Activated naive CD4-positive, alpha-beta T cell treated with anti-CD3 and anti-CD28 coated beads, Interleukin-2, amount 10 ng/mL, durations not matched to agents 7 days and 5 days (primary cell): ENCODE measurements at regions of chr16 and their contacts with region 1.

Region 1: DNA sequence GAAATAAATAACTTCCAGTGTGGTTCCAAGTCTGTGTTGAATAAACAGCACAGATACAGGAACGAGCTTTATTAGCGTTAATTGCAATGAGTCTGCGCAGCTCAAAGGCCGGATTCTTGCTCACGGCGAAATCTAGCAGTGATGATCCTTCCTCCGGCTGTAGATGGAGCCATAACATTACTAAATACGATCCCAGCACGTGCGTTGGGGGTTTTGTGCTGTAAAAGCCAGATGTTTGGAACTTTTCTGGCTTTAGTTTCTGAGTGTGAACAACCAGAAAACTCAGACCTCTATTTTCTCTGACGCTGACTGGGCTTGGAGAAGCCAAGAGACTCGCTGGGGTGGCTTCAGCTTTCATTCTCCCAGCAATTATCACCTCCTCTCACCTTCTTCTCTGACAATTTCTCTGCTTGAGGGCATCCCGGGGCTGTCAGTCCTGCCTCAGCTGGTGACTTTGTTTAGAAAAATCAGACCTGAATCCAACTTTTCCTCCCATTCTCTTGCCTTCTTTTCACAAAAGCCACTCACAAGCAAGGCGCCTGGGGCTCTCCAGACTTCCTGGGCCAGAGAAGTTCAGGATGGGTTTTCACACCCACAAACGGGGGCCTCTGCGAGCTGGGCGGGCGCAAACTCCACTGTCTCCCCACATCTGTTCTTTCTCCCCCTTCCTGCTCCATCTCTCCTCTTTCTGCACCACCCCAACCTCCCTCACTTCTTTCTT is 47.1 kb upstream of the AKTIP start:
- DNase-seq: peak; percentile 64
- H3K4me3 Mint-ChIP-seq: no peak overlapping the region
- H3K27ac Mint-ChIP-seq: no peak overlapping the region
- H3K4me1 Mint-ChIP-seq: peaks cover 35% of the 10 kb centered on the region
- H3K27me3 Mint-ChIP-seq: peaks cover 58% of the 10 kb centered on the region

Region 2: DNA sequence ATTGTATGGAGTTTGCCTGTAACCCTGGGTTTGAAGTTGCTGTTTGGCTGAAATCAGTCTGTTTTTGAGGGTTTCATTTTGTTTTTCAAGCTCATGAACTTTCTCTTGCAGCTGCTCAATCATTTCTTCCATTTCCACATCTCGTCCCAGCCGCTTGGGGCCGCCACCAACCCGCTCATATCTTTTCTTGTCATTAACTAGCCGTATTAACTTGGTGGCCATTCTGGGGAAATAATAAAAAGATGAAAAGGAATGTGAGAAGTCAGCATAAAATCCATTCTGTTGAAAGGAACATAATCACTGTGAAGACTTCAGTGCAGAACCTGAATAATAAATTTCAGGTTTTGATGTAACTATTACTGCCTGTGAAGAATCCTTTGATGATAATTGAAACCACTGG is 142.0 kb after region 1 on chr16:
- CTCF ChIA-PET with region 1: no interaction called
- DNase-seq: no peak
- H3K4me3 Mint-ChIP-seq: no peak overlapping the region
- H3K27ac Mint-ChIP-seq: no peak overlapping the region
- H3K4me1 Mint-ChIP-seq: no peaks in the 10 kb centered on the region
- H3K27me3 Mint-ChIP-seq: no peaks in the 10 kb centered on the region

Region 3: GRCh38 chr16:53703590-53704444 is 153.7 kb after region 1 on chr16 and contains the starts of genes FTO and RPGRIP1L:
- CTCF ChIA-PET with region 1: interaction called, 10 read pairs
- DNase-seq: peak; percentile 99
- H3K4me3 Mint-ChIP-seq: peak within 1 kb of the TSS; percentile 98
- H3K27ac Mint-ChIP-seq: peak within 1 kb of the TSS; percentile 93
- H3K4me1 Mint-ChIP-seq: peaks cover 31% of the 10 kb centered on the region
- H3K27me3 Mint-ChIP-seq: no peaks in the 10 kb centered on the region